Prostate gland (tissue), 2 donors: ENCODE measurements at regions of chr6 and their contacts with region 1.

Region 1: DNA sequence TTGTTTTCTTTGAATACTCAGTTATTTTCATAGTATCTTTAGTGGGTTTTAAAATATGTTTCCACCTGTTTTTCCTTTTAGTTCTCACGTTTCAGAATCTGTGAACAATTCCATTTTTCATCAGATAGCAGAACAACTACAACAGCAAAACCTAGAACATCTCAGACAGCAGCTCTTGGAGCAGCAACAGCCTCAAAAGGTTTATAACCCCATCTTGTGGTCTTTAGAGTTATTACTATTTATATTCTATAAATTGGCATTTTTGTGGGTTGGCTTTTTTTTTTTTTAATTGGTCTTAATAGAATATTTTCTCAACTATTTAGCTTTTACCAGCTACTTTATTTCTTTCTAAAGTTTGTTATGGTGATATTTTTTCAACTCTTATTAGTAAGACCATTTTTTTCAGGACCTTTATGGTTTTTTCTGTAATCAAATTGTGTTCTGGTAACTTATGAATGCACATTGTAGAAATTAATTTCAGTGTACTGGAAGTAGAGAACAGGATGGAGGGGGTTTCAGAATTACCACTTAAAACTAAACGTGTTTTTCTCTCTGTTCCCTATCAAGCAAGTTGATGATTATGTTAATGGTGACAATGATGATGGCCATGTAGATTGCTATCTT is 72.2 kb downstream of the SCAF8 start:
- DNase-seq: no peak
- H3K4me3 ChIP-seq: no peak overlapping the region
- H3K27ac ChIP-seq: no peak overlapping the region
- H3K4me1 ChIP-seq: no peaks in the 10 kb centered on the region
- H3K27me3 ChIP-seq: no peaks in the 10 kb centered on the region
- CTCF ChIP-seq: peak in 3 of 4 experiments; percentile 43 to 49 (median 44)
- POLR2A ChIP-seq: no peak

Region 2: DNA sequence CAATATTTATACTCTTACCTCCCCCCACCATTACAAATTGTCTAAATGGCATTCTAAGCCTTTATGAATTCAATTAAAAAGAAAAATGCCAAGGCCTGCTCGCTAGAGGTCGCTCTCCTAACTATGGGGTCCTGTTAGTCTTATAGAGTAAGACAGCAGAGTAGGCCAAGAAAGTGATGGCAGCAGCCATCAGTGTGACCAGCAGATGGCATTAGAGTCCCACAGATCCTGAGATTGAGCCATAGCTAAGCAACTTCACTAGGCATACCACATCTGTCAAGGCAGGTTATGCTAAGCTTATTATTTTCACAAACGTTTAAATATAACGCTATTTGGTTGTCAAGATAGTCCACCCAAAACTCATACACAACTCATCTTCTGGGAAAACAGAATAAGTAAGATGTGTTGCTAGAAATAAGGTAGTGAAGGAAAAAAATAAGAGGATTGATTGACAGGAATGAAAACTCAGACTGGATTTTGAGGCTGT is 129.8 kb before region 1 on chr6:
- intact Hi-C with region 1: loop called (anchors 5 kb)
- DNase-seq: peak; percentile 93
- H3K4me3 ChIP-seq: no peak overlapping the region
- H3K27ac ChIP-seq: no peak overlapping the region
- H3K4me1 ChIP-seq: no peaks in the 10 kb centered on the region
- H3K27me3 ChIP-seq: no peaks in the 10 kb centered on the region
- CTCF ChIP-seq: peak; percentile 77 to 99 (median 98)
- POLR2A ChIP-seq: no peak

Region 3: GRCh38 chr6:154733012-154733625 is 72.3 kb before region 1 on chr6 and contains the start of gene SCAF8:
- intact Hi-C with region 1: loop called (anchors 2 kb)
- DNase-seq: peak; percentile 67
- H3K4me3 ChIP-seq: peak within 1 kb of the TSS; percentile 99 to 100
- H3K27ac ChIP-seq: peak within 1 kb of the TSS; percentile 100
- H3K4me1 ChIP-seq: no peaks in the 10 kb centered on the region
- H3K27me3 ChIP-seq: no peaks in the 10 kb centered on the region
- CTCF ChIP-seq: peak; percentile 79 to 95 (median 92)
- POLR2A ChIP-seq: peak; percentile 39
- total RNA-seq, gene SCAF8: 42.0 to 53.5 TPM

Region 4: GRCh38 chr6:155549928-155550327 is 744.5 kb after region 1 on chr6:
- intact Hi-C with region 1: no loop called
- DNase-seq: no peak
- H3K4me3 ChIP-seq: no peak overlapping the region
- H3K27ac ChIP-seq: no peak overlapping the region
- H3K4me1 ChIP-seq: no peaks in the 10 kb centered on the region
- H3K27me3 ChIP-seq: no peaks in the 10 kb centered on the region
- CTCF ChIP-seq: no peak
- POLR2A ChIP-seq: no peak